ENCODE measurements at regions of chr17 and their contacts with region 1.

Region 1: GRCh38 chr17:74493381-74493833 is 27.0 kb downstream of the CD300A start:
- DNase-seq: peak; percentile 80
- H3K4me3 Mint-ChIP-seq: no peak overlapping the region
- H3K27ac Mint-ChIP-seq: no peak overlapping the region
- H3K4me1 Mint-ChIP-seq: no peaks in the 10 kb centered on the region
- H3K27me3 Mint-ChIP-seq: peaks cover 75% of the 10 kb centered on the region
- CTCF ChIP-seq: peak; percentile 74

Region 2: DNA sequence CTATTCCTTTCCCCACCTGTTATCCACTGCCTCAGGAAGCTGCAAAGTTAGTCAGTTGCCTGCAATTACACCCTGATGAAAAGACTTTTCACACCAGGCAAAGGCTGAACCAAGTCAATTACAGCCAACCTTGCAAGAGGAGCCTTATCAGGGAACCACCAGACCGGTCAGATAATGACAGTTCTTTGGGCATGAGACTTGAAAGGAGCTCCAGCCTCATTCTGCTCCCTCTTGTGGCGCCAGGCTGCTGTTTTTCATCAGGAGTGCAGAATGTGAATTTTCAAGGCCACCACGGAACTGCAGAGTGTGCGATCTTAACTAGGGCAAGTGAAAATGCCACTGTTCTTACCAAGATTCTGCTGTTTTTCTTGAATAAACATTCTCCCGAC is 196.9 kb before region 1 on chr17:
- CTCF ChIA-PET with region 1: no interaction called
- intact Hi-C with region 1: loop called (anchors 10 kb)
- DNase-seq: peak; percentile 51
- H3K4me3 Mint-ChIP-seq: no peak overlapping the region
- H3K27ac Mint-ChIP-seq: no peak overlapping the region
- H3K4me1 Mint-ChIP-seq: peaks cover 9% of the 10 kb centered on the region
- H3K27me3 Mint-ChIP-seq: peaks cover 71% of the 10 kb centered on the region
- CTCF ChIP-seq: peak; percentile 30

Region 3: DNA sequence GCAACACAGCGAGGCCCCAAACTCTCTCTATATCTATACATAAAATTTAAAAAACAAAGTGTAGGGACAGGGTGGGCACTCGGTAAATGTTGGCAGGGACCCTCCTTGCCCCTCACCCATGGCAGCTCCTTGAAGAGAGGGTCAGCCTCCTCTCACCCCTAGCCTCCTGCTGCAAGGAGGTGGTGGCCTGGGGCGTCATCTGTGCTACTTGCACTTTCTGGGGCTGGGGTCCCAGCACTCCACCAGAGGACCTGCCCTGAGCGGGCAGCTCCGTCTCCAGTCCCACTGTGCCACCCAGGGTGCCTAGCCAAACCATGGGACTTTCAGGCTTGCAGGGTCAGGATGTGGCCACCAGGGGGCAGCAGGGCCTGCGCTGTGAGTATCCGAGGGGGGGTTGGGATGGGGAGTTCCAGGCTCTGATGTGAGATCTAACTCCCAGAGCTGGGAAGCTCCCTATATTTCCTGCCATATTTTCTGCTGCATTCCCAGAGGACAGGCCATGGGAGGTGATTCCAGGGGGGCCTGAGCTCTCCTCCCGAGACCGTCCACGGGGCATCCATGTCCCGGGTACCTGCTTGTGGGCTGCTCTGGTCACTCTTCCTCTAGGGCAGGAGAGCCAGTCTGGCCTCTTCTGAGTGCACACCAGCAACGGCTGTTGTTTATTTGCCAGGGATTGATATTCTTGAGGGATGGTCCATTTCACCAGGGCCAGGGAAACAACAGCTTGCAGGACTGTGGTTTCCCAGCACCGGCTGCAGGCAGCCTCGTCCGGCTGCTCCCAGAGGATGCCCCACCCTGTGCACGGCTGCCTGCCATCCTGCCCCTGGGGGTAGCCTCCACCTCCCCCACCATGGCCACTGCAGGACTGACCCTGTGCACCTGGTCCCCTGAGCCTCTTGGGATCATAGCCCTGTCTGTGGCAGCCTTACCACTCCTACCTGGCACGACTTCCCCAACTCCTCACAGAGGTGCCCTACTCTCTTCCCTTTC is 125.0 kb before region 1 on chr17:
- CTCF ChIA-PET with region 1: interaction called, 4 read pairs
- intact Hi-C with region 1: loop called (anchors 2 kb)
- DNase-seq: peak; percentile 77
- H3K4me3 Mint-ChIP-seq: no peak overlapping the region
- H3K27ac Mint-ChIP-seq: no peak overlapping the region
- H3K4me1 Mint-ChIP-seq: no peaks in the 10 kb centered on the region
- H3K27me3 Mint-ChIP-seq: peaks cover 67% of the 10 kb centered on the region
- CTCF ChIP-seq: peak; percentile 91

Region 4: DNA sequence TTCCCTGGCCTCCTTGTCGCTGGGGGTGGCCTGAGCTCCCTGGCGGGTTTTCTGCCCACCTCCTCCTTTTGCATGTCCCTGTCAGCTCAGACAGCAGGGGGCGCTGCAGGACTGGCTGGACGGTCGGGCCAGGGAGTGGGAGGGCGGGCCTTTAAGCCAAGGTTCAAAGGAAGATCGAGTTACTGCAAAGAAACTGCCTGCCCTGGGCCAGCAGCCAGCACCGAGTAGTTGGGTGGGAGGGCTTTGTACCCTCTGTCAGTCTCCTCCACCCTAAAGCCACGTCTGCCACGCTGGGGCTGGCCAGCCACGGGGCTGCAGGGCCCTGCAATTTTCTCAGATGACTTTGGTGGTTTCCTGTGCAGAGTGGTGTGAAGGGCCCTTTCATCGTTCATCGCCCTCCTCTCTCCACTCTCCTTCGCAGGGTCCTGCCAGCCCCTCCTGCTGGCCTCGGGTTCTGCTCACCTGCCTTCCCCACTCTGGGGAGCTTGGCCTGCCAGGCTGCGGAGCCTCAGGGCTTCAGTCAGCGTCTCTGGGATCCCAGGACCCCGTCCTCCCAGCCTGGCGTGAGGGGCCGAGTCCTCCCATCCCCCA is 113.8 kb before region 1 on chr17:
- CTCF ChIA-PET with region 1: no interaction called
- intact Hi-C with region 1: loop called (anchors 1 kb)
- DNase-seq: peak; percentile 95
- H3K4me3 Mint-ChIP-seq: no peak overlapping the region
- H3K27ac Mint-ChIP-seq: no peak overlapping the region
- H3K4me1 Mint-ChIP-seq: peaks cover 18% of the 10 kb centered on the region
- H3K27me3 Mint-ChIP-seq: peaks cover 42% of the 10 kb centered on the region
- CTCF ChIP-seq: peak; percentile 93

Region 5: GRCh38 chr17:74457146-74457819 is 36.1 kb before region 1 on chr17:
- CTCF ChIA-PET with region 1: interaction called, 4 read pairs
- intact Hi-C with region 1: loop called (anchors 5 kb)
- DNase-seq: peak; percentile 78
- H3K4me3 Mint-ChIP-seq: no peak overlapping the region
- H3K27ac Mint-ChIP-seq: no peak overlapping the region
- H3K4me1 Mint-ChIP-seq: no peaks in the 10 kb centered on the region
- H3K27me3 Mint-ChIP-seq: peaks cover 47% of the 10 kb centered on the region
- CTCF ChIP-seq: peak; percentile 98

Region 6: GRCh38 chr17:74566132-74566753 is 72.8 kb after region 1 on chr17:
- CTCF ChIA-PET with region 1: no interaction called
- intact Hi-C with region 1: no loop called
- DNase-seq: peak; percentile 48
- H3K4me3 Mint-ChIP-seq: no peak overlapping the region
- H3K27ac Mint-ChIP-seq: no peak overlapping the region
- H3K4me1 Mint-ChIP-seq: peaks cover 13% of the 10 kb centered on the region
- H3K27me3 Mint-ChIP-seq: peaks cover 93% of the 10 kb centered on the region
- CTCF ChIP-seq: peak; percentile 63

Measured in Calu3 (cell line).